Gastrocnemius medialis (tissue), 4 donors: ENCODE measurements at regions of chr3 and their contacts with region 1.

Region 1: GRCh38 chr3:52455283-52456168 is at the start of gene NISCH:
- DNase-seq: peak; percentile 82 to 90
- ATAC-seq: peak; percentile 43 to 61
- H3K4me3 ChIP-seq: peak within 1 kb of the TSS; percentile 73 to 95 (median 86)
- H3K27ac ChIP-seq: peak within 1 kb of the TSS; percentile 94 to 99 (median 97)
- H3K4me1 ChIP-seq: peaks cover 38 to 39% of the 10 kb centered on the region in 2 donors
- H3K27me3 ChIP-seq: no peaks in the 10 kb centered on the region
- CTCF ChIP-seq: no peak
- POLR2A ChIP-seq: peak; percentile 73 to 76
- total RNA-seq, gene NISCH: 19.2 to 38.3 (median 25.0) TPM

Region 2: DNA sequence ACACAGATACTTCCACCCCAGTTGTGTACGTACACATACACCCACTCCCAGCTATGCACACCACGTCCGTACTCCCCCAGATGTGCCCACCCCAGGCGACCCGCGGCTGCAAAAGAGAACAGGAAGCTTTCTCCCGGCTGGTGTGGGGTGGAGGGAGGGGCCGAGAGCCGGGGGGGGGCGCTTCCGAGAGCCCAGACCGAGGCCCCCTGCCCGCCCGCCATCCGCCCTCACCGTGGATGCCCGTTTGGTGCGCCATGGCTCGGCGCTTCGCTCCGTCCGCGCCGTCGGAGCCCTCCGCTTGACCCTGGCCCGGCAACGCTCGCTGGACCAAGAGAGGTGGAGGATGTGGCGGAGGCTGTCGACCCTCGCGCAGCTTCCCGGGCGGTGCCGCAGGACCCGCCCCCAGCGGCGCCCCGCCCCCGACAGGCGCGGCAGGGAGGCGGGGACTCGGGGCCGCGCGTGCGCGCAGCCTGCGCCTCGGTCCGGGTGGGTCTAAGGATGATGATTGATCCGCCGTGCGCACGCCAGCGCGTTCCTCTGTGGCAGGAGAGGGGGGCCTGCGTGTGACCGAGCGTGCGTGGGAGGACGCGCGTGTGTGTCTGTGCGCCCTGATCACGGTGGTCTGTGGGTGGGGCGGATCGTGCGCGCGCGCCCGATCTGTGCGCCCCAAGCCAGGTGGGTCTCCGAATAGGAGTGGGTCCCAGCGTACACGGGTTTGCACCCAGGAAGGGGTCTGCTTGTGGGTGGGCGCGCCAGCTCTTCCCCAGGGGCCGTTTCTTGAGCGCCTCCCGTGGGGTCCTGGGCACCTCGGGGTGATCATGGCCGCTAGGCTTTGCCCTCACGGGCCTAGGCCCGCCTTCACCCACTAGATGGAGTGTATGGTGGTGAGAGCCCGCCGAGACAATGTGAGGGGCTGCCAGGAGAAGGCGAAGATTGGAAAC is 216.5 kb before region 1 on chr3 and contains the start of gene TWF2:
- in situ Hi-C with region 1: no loop called
- intact Hi-C with region 1: loop called (anchors 5 kb)
- DNase-seq: peak; percentile 45 to 59
- ATAC-seq: peak; percentile 20 to 28
- H3K4me3 ChIP-seq: peak within 1 kb of the TSS; percentile 72 to 95 (median 90)
- H3K27ac ChIP-seq: peak within 1 kb of the TSS; percentile 99 to 100 (median 100)
- H3K4me1 ChIP-seq: peaks cover 50 to 54% of the 10 kb centered on the region in 2 donors
- H3K27me3 ChIP-seq: no peaks in the 10 kb centered on the region
- CTCF ChIP-seq: peak in 4 of 5 experiments; percentile 31 to 60 (median 36)
- POLR2A ChIP-seq: peak; percentile 76 to 81
- total RNA-seq, gene TWF2: 99.2 to 222 (median 168) TPM

Region 3: DNA sequence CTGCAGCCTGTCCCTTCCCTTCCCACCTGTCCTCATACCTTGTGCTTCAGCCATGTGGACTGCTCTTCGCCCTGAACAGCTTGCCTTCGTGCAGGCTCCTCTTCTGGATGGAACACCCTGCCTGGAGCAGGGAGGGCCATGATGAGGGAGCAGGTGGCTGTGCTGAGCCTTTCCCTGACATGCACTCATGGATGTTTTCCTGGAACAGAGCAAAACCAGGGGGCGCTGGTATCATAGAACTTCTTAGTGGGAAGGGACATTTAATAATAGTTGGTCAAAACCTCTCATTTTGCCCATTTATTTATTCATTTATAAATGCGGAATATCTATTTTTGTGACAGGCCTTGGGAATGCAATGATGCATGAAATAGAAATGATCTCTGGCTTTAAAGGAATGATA is 1188.2 kb after region 1 on chr3:
- in situ Hi-C with region 1: no loop called
- intact Hi-C with region 1: no loop called
- DNase-seq: no peak
- ATAC-seq: no peak
- H3K4me3 ChIP-seq: no peak overlapping the region
- H3K27ac ChIP-seq: no peak overlapping the region
- H3K4me1 ChIP-seq: peaks cover 0 to 16% of the 10 kb centered on the region in 2 donors
- H3K27me3 ChIP-seq: no peaks in the 10 kb centered on the region
- CTCF ChIP-seq: no peak
- POLR2A ChIP-seq: no peak